H1 (cell line): ENCODE measurements at regions of chrX and their contacts with region 1.

Region 1: GRCh38 chrX:118627084-118627758 is 100.2 kb upstream of the IL13RA1 start:
- DNase-seq: no peak
- H3K4me3 ChIP-seq: no peak overlapping the region
- H3K27ac ChIP-seq: no peak overlapping the region
- H3K4me1 ChIP-seq: no peaks in the 10 kb centered on the region
- H3K27me3 ChIP-seq: no peaks in the 10 kb centered on the region
- CTCF ChIP-seq: peak in 2 of 3 experiments; percentile 26 to 42; a peak in 2 of 4 replicates
- EP300 ChIP-seq: no peak
- POLR2A ChIP-seq: no peak
- RAD21 ChIP-seq: peak; percentile 33 to 50

Region 2: GRCh38 chrX:118562582-118563164 is 64.5 kb before region 1 on chrX:
- CTCF ChIA-PET with region 1: no interaction called
- POLR2A ChIA-PET with region 1: no interaction called
- DNase-seq: no peak
- H3K4me3 ChIP-seq: no peak overlapping the region
- H3K27ac ChIP-seq: no peak overlapping the region
- H3K4me1 ChIP-seq: no peaks in the 10 kb centered on the region
- H3K27me3 ChIP-seq: no peaks in the 10 kb centered on the region
- CTCF ChIP-seq: no peak
- EP300 ChIP-seq: no peak
- POLR2A ChIP-seq: no peak
- RAD21 ChIP-seq: no peak

Region 3: DNA sequence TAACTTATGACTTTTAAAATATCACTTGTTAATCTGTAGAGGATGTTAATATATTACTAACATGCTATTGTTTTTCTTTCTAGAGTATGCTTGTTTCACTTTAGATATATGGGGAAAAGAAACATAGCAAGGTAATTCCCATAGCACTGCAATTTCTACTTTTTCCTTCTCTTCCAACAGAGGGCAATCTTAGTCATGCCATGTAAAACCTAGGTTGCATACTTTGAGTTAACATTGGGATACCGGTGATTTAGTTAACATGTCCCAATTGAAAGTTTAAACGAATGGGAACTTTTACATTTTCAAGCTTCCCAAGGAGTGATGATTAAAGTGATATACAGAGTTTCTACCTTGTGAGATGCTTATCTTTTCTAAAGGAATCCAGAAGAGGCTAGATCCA is 10.8 kb after region 1 on chrX:
- CTCF ChIA-PET with region 1: interaction called, 11 read pairs
- POLR2A ChIA-PET with region 1: no interaction called
- DNase-seq: no peak
- H3K4me3 ChIP-seq: no peak overlapping the region
- H3K27ac ChIP-seq: no peak overlapping the region
- H3K4me1 ChIP-seq: no peaks in the 10 kb centered on the region
- H3K27me3 ChIP-seq: no peaks in the 10 kb centered on the region
- CTCF ChIP-seq: peak in 2 of 3 experiments; percentile 6 to 20; a peak in 2 of 4 replicates
- EP300 ChIP-seq: no peak
- POLR2A ChIP-seq: no peak
- RAD21 ChIP-seq: peak; percentile 32 to 35

Region 4: GRCh38 chrX:118770133-118770760 is 143.0 kb after region 1 on chrX:
- CTCF ChIA-PET with region 1: no interaction called
- POLR2A ChIA-PET with region 1: no interaction called
- DNase-seq: no peak
- H3K4me3 ChIP-seq: no peak overlapping the region
- H3K27ac ChIP-seq: no peak overlapping the region
- H3K4me1 ChIP-seq: no peaks in the 10 kb centered on the region
- H3K27me3 ChIP-seq: no peaks in the 10 kb centered on the region
- CTCF ChIP-seq: no peak
- EP300 ChIP-seq: no peak
- POLR2A ChIP-seq: no peak
- RAD21 ChIP-seq: no peak